ENCODE measurements at regions of chr1 and their contacts with region 1.

Region 1: DNA sequence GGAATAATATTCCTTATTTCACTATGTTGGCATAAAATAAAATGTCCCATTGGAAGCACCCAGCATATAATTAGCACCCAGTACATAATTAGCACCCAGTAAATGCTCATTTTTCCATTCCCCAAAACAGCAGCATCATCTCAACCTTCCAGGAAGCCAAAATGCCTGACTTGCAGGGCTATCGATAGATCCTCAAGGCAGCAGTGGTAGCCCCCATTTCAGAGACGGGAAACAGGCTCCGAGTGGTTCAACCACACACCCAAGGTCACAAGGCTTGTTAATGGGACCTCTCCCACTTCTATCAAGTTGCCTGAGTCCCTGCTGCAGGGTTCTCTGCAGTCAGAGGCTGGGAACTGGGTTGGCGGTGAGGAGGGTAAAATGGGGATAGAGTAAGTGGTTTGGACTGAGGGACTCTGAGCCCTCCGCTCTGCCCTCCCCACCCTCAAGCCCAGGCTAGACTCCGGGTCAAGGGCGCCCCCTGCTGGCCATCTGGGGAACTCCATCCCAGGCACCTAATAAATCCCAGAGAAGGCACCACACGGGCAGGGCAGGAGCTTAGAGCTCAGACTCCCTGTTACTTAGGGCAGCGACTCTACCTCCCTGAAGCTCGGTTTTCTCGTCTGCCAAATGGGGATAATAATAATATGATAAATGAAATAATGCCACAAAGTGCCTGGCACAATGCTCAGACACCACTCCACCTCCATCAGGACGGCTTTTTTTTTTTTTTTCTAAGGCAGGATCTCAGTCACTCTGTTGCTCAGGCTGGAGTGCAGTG is 21.9 kb upstream of the LAPTM5 start:
- DNase-seq: peak; percentile 95
- ATAC-seq: peak; percentile 78
- H3K4me3 Mint-ChIP-seq: no peak overlapping the region
- H3K27ac Mint-ChIP-seq: no peak overlapping the region
- H3K4me1 Mint-ChIP-seq: peaks cover 15% of the 10 kb centered on the region
- H3K27me3 Mint-ChIP-seq: no peaks in the 10 kb centered on the region

Region 2: DNA sequence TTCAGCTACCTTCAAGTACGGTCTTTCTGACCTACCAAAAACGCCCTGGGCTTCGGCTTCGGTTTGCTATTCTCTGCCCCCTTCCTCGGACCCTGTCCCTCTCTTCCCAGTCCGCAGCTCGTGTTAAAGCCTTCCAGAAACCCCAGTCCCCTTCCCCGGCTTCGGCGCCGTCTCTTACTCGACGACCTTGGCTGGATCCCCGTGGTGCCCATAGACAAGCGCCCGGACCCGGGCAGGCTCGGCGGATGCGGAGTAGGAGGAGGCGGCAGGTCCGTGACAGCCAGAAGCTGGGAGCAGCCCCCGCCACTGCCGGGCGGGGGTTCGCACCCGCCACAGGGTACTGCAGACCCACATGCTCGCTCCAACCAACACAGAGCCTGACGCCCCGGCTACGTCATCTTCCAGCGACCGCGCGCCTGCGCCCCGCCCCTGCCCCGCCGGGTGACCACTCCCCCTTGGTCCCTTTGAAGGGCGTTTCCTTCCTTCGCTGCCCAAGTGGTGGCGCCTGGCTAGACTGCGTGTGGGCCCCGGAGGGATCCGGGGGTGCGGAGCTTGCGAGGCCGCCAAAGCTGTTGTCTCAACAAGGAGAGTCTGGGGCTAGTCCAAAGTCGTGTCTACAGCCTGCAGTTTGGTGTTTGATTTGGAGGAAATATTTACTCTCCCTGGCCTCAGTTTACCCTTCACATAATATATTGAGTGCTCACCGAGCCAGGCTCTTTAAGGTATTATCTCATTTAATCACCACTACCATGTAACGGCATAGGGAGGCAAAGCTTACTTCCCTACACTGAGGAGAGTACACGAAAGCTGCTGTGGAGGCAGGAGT is 1548.7 kb before region 1 on chr1 and contains the start of gene MECR:
- CTCF ChIA-PET with region 1: no interaction called
- POLR2A ChIA-PET with region 1: no interaction called
- intact Hi-C with region 1: loop called in 1 of 2 experiments (anchors 5 kb)
- DNase-seq: peak; percentile 97
- ATAC-seq: peak; percentile 97
- H3K4me3 Mint-ChIP-seq: peak within 1 kb of the TSS; percentile 94
- H3K27ac Mint-ChIP-seq: peak within 1 kb of the TSS; percentile 94
- H3K4me1 Mint-ChIP-seq: peaks cover 18% of the 10 kb centered on the region
- H3K27me3 Mint-ChIP-seq: peaks cover 9% of the 10 kb centered on the region
- total RNA-seq, gene MECR: 41.3 to 43.1 TPM

Region 3: DNA sequence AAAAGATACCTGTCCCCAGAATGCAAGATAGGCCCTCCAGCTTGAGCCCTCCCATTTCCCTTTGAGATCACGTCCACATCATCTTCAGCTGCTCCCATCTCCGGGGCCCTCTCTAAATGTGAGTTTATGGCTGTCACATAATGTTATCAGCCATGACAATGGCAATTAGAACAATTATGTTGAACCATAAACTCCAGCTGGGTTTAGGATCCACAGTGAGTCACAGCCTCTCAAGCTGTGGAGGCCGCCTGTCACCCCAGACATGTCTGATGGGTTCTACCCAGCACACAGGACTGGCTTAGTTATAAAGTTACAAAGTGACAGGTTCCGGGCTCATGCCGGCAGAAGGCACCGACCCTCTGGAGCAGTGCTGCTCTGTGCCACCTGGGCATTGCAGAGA is 945.9 kb before region 1 on chr1:
- CTCF ChIA-PET with region 1: no interaction called
- POLR2A ChIA-PET with region 1: no interaction called
- intact Hi-C with region 1: no loop called
- DNase-seq: no peak
- ATAC-seq: no peak
- H3K4me3 Mint-ChIP-seq: no peak overlapping the region
- H3K27ac Mint-ChIP-seq: no peak overlapping the region
- H3K4me1 Mint-ChIP-seq: no peaks in the 10 kb centered on the region
- H3K27me3 Mint-ChIP-seq: peaks cover 8% of the 10 kb centered on the region

Region 4: GRCh38 chr1:30732277-30732996 is 47.0 kb before region 1 on chr1:
- CTCF ChIA-PET with region 1: interaction called, 40 read pairs
- POLR2A ChIA-PET with region 1: interaction called, 5 read pairs
- intact Hi-C with region 1: no loop called
- DNase-seq: no peak
- ATAC-seq: peak; percentile 25
- H3K4me3 Mint-ChIP-seq: no peak overlapping the region
- H3K27ac Mint-ChIP-seq: peak overlapping the region; percentile 60
- H3K4me1 Mint-ChIP-seq: peaks cover 11% of the 10 kb centered on the region
- H3K27me3 Mint-ChIP-seq: no peaks in the 10 kb centered on the region

Region 5: DNA sequence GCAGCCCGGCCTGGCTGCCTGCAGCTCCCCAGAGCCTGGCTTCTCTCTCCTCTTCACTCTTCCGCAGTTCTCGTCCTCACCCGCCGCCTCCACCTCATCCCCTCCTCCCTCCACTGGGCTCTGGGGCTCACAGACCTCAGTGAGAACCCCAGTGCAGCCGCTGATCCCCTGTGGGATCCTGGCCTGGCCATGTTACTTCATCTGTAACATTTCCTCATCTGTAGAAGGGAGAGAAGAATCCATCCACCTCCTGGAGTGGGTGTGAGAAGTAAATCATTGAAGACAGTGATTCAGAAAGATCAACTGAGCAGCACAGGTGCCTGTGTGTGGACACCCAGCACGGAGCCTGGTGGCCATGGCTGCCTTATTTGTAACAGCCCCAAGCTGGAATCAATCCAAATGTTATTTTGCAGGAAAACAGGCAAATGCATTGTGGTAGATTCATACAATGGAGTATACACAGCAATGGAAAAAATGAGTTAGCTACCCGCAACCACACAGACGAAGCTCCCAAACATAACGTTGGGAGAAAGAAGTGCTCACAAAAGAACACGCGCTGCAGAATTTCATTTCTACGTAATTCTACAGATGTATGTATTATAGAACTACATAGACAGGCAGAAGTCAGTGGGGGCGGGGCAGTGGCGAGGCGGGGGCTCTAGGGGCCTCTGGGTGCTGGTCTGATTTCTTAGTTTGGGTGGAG is 30.6 kb before region 1 on chr1:
- CTCF ChIA-PET with region 1: interaction called, 158 read pairs
- POLR2A ChIA-PET with region 1: no interaction called
- intact Hi-C with region 1: loop called in 1 of 2 experiments (anchors 2 kb)
- DNase-seq: peak; percentile 71
- ATAC-seq: peak; percentile 29
- H3K4me3 Mint-ChIP-seq: peak overlapping the region; percentile 71
- H3K27ac Mint-ChIP-seq: peak overlapping the region; percentile 99
- H3K4me1 Mint-ChIP-seq: peaks cover 98% of the 10 kb centered on the region
- H3K27me3 Mint-ChIP-seq: no peaks in the 10 kb centered on the region

Region 6: DNA sequence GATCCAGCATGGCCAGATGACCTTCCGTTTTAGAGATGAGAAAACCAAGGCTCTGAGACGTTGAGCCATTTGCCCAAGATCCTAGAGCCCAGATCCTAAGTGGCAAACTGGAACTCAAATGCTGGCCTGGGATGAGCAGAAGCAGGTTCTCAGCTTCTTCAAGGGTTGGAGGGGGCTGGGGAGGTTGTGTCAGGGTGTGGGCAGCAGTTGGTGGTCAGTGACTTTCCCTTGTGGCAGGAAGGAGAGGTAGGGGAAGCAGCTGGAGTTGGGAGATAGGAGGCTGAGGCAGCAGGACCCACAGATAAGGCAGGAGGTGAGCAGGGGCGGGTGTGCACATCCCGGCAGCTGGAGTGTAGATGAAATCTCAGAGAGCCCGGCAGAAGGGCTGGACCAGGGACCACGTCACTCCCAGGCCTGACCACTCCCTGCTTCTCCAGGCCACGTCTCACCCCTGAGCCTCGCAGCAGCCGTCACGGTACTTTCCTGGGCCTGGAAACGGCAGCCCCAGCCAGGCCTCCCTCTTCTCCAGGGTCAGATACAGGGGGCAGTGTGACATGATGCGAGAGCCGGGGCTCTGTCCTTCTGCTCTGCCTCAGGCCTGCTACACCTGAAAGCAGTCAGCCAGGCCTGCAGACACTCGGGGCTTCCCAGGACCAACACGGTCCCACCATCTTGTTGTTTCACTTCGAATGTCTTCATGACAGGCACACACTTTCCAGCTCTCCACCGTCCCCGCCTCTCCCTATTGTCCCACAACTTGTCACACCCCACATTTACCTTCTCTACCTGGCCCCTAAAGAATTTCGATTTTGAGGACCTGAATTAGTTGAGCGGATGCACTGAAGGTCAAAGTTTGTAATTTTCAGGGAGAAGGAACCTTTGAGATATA is 10.4 kb before region 1 on chr1:
- CTCF ChIA-PET with region 1: interaction called, 158 read pairs
- POLR2A ChIA-PET with region 1: no interaction called
- intact Hi-C with region 1: no loop called
- DNase-seq: no peak
- ATAC-seq: no peak
- H3K4me3 Mint-ChIP-seq: no peak overlapping the region
- H3K27ac Mint-ChIP-seq: no peak overlapping the region
- H3K4me1 Mint-ChIP-seq: peaks cover 30% of the 10 kb centered on the region
- H3K27me3 Mint-ChIP-seq: no peaks in the 10 kb centered on the region

Region 7: DNA sequence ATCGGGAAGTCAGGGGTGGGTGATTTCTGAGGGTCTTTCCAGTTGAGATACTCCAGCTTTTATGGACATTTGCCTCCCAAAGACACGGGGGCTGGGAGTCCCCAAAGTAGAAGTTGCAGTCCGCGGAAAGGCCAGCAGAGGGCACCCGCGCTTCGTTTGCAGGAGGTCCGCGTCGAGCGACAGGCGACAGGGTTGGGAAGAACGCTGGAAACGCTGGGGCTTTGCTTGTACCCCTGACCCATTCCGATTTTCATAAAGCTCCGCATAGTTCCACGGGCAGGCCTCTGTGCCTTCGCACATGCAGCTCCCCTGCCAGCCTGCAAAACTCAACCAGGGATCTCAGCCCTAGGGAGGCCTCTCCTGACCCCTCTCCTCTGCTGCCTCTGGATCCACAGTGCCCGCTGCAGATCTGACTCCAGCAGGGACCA is 22.3 kb after region 1 on chr1:
- CTCF ChIA-PET with region 1: interaction called, 41 read pairs
- POLR2A ChIA-PET with region 1: interaction called, 4 read pairs
- intact Hi-C with region 1: loop called in 1 of 2 experiments (anchors 1 kb)
- DNase-seq: peak; percentile 90
- ATAC-seq: peak; percentile 77
- H3K4me3 Mint-ChIP-seq: no peak overlapping the region
- H3K27ac Mint-ChIP-seq: no peak overlapping the region
- H3K4me1 Mint-ChIP-seq: no peaks in the 10 kb centered on the region
- H3K27me3 Mint-ChIP-seq: peaks cover 22% of the 10 kb centered on the region

Region 8: GRCh38 chr1:30911046-30911954 is 131.8 kb after region 1 on chr1:
- CTCF ChIA-PET with region 1: interaction called, 34 read pairs
- POLR2A ChIA-PET with region 1: no interaction called
- intact Hi-C with region 1: loop called (anchors 1 kb)
- DNase-seq: peak; percentile 82
- ATAC-seq: peak; percentile 74
- H3K4me3 Mint-ChIP-seq: no peak overlapping the region
- H3K27ac Mint-ChIP-seq: no peak overlapping the region
- H3K4me1 Mint-ChIP-seq: peaks cover 13% of the 10 kb centered on the region
- H3K27me3 Mint-ChIP-seq: peaks cover 20% of the 10 kb centered on the region